ENCODE measurements at regions of chr11 and their contacts with region 1.

Region 1: GRCh38 chr11:65988791-65989592 is 13.0 kb downstream of the EIF1AD start:
- DNase-seq: peak; percentile 76
- ATAC-seq: peak; percentile 97 to 98
- H3K4me3 ChIP-seq: no peak overlapping the region
- H3K27ac ChIP-seq: no peak overlapping the region
- H3K4me1 ChIP-seq: no peaks in the 10 kb centered on the region
- H3K27me3 ChIP-seq: no peaks in the 10 kb centered on the region
- CTCF ChIP-seq: peak; percentile 91

Region 2: GRCh38 chr11:65888163-65888814 is 100.7 kb before region 1 on chr11 and contains the start of gene FIBP:
- intact Hi-C with region 1: loop called (anchors 10 kb)
- DNase-seq: peak; percentile 98
- ATAC-seq: peak; percentile 89 to 90
- H3K4me3 ChIP-seq: peak within 1 kb of the TSS; percentile 88
- H3K27ac ChIP-seq: peak within 1 kb of the TSS; percentile 98
- H3K4me1 ChIP-seq: peaks cover 57% of the 10 kb centered on the region
- H3K27me3 ChIP-seq: no peaks in the 10 kb centered on the region
- CTCF ChIP-seq: peak; percentile 83
- total RNA-seq, gene FIBP: 44.0 TPM

Measured in lower lobe of right lung (tissue), 2 donors.